ENCODE measurements at regions of chr15 and their contacts with region 1.

Region 1: GRCh38 chr15:51776952-51777574 is 25.7 kb downstream of the TMOD2 start:
- DNase-seq: peak; percentile 77
- ATAC-seq: peak; percentile 82
- H3K4me3 Mint-ChIP-seq: no peak overlapping the region
- H3K27ac Mint-ChIP-seq: no peak overlapping the region
- H3K4me1 Mint-ChIP-seq: peaks cover 7% of the 10 kb centered on the region
- H3K27me3 Mint-ChIP-seq: no peaks in the 10 kb centered on the region

Region 2: GRCh38 chr15:51649659-51650521 is 127.2 kb before region 1 on chr15:
- CTCF ChIA-PET with region 1: interaction called, 216 read pairs
- DNase-seq: peak; percentile 52
- ATAC-seq: peak; percentile 70
- H3K4me3 Mint-ChIP-seq: no peak overlapping the region
- H3K27ac Mint-ChIP-seq: no peak overlapping the region
- H3K4me1 Mint-ChIP-seq: peaks cover 11% of the 10 kb centered on the region
- H3K27me3 Mint-ChIP-seq: peaks cover 2% of the 10 kb centered on the region

Region 3: GRCh38 chr15:51731549-51732267 is 45.4 kb before region 1 on chr15:
- CTCF ChIA-PET with region 1: interaction called, 34 read pairs
- DNase-seq: peak; percentile 62
- ATAC-seq: peak; percentile 69
- H3K4me3 Mint-ChIP-seq: peak overlapping the region; percentile 77
- H3K27ac Mint-ChIP-seq: peak overlapping the region; percentile 97
- H3K4me1 Mint-ChIP-seq: peaks cover 70% of the 10 kb centered on the region
- H3K27me3 Mint-ChIP-seq: no peaks in the 10 kb centered on the region

Region 4: GRCh38 chr15:51758645-51759044 is 18.4 kb before region 1 on chr15:
- CTCF ChIA-PET with region 1: interaction called, 29 read pairs
- DNase-seq: no peak
- ATAC-seq: no peak
- H3K4me3 Mint-ChIP-seq: no peak overlapping the region
- H3K27ac Mint-ChIP-seq: no peak overlapping the region
- H3K4me1 Mint-ChIP-seq: peaks cover 10% of the 10 kb centered on the region
- H3K27me3 Mint-ChIP-seq: peaks cover 3% of the 10 kb centered on the region

Measured in activated CD8-positive, alpha-beta memory T cell treated with anti-CD3 and anti-CD28 coated beads, Interleukin-2, amount 10 ng/mL, durations not matched to agents 7 days and 5 days (primary cell).